ENCODE measurements at regions of chr6 and their contacts with region 1.

Region 1: GRCh38 chr6:1596088-1596852 is 13.4 kb upstream of the FOXC1 start:
- ATAC-seq: peak; percentile 63 to 85 (median 80)
- H3K4me3 ChIP-seq: peak overlapping the region in 2 of 5 donors; percentile 19 to 28
- H3K27ac ChIP-seq: no peak overlapping the region
- H3K4me1 ChIP-seq: peaks cover 0 to 2% of the 10 kb centered on the region in 2 donors

Region 2: GRCh38 chr6:1757131-1757530 is 160.9 kb after region 1 on chr6:
- in situ Hi-C with region 1: no loop called
- ATAC-seq: no peak
- H3K4me3 ChIP-seq: no peak overlapping the region
- H3K27ac ChIP-seq: no peak overlapping the region
- H3K4me1 ChIP-seq: peaks cover 5 to 12% of the 10 kb centered on the region in 2 donors

Region 3: DNA sequence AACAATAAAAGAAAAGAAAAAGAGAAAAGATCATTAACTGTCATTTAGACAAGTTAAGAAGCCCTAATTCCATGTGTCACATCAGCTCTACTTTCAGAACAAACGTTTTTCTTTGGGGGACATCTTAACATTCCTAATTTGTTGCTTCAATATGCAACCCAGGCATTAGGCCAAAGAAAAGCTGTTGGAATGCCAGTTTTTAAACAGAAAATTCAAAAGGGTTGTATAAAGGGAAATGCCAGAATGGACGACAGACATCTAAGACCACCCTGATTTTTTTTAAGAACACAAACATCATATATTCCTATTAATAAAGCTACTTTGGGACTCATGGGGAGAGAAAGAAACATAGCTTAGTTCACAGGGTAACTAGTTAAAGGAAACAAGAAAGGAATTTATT is 334.1 kb after region 1 on chr6:
- in situ Hi-C with region 1: no loop called
- ATAC-seq: no peak
- H3K4me3 ChIP-seq: no peak overlapping the region
- H3K27ac ChIP-seq: no peak overlapping the region
- H3K4me1 ChIP-seq: no peaks in the 10 kb centered on the region

Region 4: GRCh38 chr6:2353412-2354137 is 757.3 kb after region 1 on chr6:
- in situ Hi-C with region 1: loop called in 6 of 9 experiments (anchors 10 to 25 kb)
- ATAC-seq: peak in 6 of 8 experiments; percentile 41 to 76 (median 60)
- H3K4me3 ChIP-seq: no peak overlapping the region
- H3K27ac ChIP-seq: no peak overlapping the region
- H3K4me1 ChIP-seq: peaks cover 0 to 3% of the 10 kb centered on the region in 2 donors

Region 5: DNA sequence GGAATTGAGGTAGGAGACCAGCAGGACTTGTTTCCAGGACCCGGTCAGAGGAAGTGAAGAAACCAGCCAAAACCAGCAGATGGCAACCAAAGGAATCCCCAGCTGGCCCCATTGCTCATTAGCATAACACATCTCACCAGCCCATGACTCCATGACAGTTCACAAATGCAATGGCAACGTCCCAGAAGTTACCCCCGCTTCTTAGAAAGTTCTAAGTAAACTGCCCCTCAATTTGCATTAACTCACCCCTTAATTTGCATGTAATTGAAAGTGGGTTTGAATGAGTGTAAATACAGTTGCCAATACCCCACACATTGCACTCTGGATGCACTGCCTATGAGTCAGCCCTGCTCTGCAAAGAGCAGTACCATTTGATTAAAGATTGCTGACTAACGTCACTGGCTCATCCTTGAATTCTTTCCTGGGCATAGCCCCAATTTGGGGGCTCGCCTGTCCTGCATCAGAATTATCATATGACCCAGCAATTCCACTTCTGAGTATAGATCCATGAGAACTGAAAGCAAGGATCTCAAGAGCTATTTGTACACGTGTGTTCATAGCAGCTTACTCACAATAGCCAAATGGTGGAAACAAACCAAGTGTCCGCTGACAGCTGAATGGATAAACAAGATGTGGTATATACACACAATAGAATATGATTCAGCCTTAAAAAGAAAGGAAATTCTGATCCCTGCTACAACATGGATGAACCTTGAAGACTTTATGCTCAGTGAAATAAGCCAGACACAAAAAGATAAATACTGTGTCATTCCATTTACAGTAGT is 1118.0 kb after region 1 on chr6:
- in situ Hi-C with region 1: loop called in 1 of 9 experiments (anchors 25 kb)
- ATAC-seq: peak; percentile 50 to 97 (median 76)
- H3K4me3 ChIP-seq: no peak overlapping the region
- H3K27ac ChIP-seq: no peak overlapping the region
- H3K4me1 ChIP-seq: no peaks in the 10 kb centered on the region

Measured in motor neuron (in vitro differentiated cells).